ENCODE measurements at regions of chr1 and their contacts with region 1.

Region 1: DNA sequence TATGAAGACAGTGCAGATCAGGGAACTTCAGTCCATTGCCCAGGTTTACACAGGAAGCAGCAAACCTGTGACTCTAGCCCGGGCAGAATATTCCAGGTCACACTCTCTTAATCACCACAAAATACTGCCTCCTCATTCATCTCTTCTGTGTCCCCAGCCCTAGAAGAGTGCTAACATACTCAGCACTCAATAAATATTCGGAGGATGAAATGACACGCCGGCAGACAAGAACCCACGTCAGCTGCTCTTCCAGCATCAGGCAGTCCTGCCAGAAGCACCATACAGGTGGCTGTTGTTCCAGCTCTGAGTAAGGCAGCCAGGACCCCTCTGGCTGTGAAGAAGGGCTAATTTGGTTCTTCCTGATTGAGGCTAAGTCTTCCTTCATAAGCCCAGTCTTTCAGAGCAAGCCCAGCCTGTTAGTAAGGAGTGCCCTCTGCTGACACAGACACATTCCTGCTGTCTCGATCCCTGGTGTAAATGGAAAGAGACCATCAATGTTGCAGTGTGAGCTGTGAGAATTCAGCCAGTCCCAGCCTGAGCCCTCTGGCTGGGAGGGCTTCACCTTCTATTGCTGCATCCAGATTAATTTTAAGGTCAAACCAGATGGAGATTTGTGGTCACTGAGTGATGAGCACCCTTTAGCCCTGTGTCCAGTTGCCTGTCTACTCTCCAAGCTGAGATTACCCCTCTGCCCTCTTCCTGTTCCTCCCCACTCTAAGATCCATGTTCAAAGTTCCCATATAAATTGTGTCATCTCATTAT is 45.0 kb upstream of the KIRREL1 start:
- DNase-seq: peak; percentile 35
- H3K4me3 ChIP-seq: no peak overlapping the region
- H3K27ac ChIP-seq: no peak overlapping the region
- H3K4me1 ChIP-seq: no peaks in the 10 kb centered on the region
- H3K27me3 ChIP-seq: no peaks in the 10 kb centered on the region
- CTCF ChIP-seq: peak; percentile 77 to 87

Region 2: GRCh38 chr1:157380523-157380922 is 568.0 kb before region 1 on chr1:
- CTCF ChIA-PET with region 1: no interaction called
- dilution Hi-C with region 1: no loop called
- in situ Hi-C with region 1: no loop called
- intact Hi-C with region 1: loop called (anchors 2 kb)
- DNase-seq: no peak
- H3K4me3 ChIP-seq: no peak overlapping the region
- H3K27ac ChIP-seq: no peak overlapping the region
- H3K4me1 ChIP-seq: no peaks in the 10 kb centered on the region
- H3K27me3 ChIP-seq: no peaks in the 10 kb centered on the region
- CTCF ChIP-seq: no peak

Region 3: DNA sequence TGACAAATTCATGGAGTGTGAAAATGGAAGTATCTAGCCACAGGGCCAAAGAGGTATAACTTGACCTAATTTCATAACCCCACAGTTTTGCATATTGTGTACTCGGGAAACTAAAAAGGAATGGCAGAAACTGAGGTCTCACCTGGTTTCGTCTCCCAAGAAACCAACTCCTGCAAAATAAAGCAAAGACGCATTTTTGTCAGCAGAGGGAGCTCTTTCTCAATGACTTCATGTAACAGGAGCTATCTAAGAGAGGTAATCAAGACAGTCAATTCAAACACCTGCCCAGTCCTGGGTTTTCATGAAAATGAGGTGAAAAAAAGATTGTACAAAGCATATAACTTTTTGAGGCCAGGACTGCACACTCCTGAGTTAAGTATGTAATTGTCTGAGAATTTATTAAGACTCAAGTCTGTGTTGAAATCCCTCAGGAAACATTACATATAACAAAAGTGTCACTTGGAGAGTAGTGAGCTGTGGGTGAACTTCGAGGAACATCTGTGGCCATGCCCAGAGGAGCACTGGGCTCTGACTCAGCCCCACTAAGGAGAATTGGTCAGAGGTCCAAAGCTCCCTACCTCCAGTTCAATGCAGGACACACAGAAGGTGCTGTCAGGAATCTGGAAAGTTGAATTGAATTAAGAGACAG is 368.2 kb before region 1 on chr1:
- CTCF ChIA-PET with region 1: interaction called, 4 read pairs
- dilution Hi-C with region 1: no loop called
- in situ Hi-C with region 1: loop called in 1 of 2 experiments (anchors 25 kb)
- intact Hi-C with region 1: loop called (anchors 1 kb)
- DNase-seq: peak; percentile 58
- H3K4me3 ChIP-seq: no peak overlapping the region
- H3K27ac ChIP-seq: no peak overlapping the region
- H3K4me1 ChIP-seq: no peaks in the 10 kb centered on the region
- H3K27me3 ChIP-seq: peaks cover under 1% of the 10 kb centered on the region
- CTCF ChIP-seq: peak; percentile 76

Region 4: DNA sequence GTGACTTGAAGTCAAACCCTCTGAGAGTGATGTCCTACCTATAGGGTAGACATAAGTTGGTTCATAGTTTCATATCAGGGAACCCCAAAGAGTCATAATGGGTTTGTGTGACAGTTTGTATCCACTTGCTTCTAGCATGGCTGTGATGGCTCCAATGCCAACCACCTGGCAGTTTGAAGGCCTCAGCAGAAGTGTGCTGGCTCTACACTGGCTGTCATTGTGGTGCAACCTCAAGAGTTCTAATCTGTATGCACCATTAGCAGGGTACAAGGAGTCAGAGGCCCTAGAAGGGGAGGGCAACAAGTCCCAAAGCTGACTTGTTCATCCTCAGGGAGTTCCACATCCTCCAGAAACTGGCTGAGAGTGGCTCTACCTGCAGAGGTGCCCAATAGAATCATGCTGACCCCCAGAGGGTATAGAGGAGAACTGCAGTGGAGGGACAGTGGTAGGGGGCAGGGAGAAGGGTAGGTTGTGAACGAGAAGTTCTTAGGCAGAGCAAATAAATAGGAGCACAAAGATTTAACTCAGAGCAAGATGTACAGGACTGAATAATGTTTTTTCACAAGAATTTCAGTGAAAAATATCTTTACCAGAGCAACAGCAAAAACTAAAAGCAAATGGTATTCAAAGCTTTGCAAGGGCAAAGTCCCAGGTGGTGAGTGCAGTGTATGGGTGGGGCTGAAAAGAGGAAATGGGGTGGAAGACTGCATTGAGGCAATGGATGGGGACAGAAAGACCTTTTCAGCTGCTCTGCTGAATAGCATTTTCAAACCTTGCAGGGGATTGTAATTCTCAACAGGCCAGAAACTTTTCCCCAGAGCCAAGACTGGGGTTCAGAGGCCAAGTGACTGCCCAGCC is 174.8 kb before region 1 on chr1:
- CTCF ChIA-PET with region 1: no interaction called
- dilution Hi-C with region 1: loop called (anchors 25 kb)
- in situ Hi-C with region 1: no loop called
- intact Hi-C with region 1: loop called (anchors 1 kb)
- DNase-seq: no peak
- H3K4me3 ChIP-seq: no peak overlapping the region
- H3K27ac ChIP-seq: no peak overlapping the region
- H3K4me1 ChIP-seq: no peaks in the 10 kb centered on the region
- H3K27me3 ChIP-seq: peaks cover 6% of the 10 kb centered on the region
- CTCF ChIP-seq: peak; percentile 13 to 31

Region 5: GRCh38 chr1:157878059-157878458 is 70.4 kb before region 1 on chr1:
- CTCF ChIA-PET with region 1: interaction called, 10 read pairs
- dilution Hi-C with region 1: no loop called
- in situ Hi-C with region 1: loop called (anchors 5 kb)
- intact Hi-C with region 1: loop called (anchors 1 kb)
- DNase-seq: peak; percentile 35
- H3K4me3 ChIP-seq: no peak overlapping the region
- H3K27ac ChIP-seq: no peak overlapping the region
- H3K4me1 ChIP-seq: no peaks in the 10 kb centered on the region
- H3K27me3 ChIP-seq: peaks cover 3% of the 10 kb centered on the region
- CTCF ChIP-seq: peak; percentile 32 to 64

Region 6: DNA sequence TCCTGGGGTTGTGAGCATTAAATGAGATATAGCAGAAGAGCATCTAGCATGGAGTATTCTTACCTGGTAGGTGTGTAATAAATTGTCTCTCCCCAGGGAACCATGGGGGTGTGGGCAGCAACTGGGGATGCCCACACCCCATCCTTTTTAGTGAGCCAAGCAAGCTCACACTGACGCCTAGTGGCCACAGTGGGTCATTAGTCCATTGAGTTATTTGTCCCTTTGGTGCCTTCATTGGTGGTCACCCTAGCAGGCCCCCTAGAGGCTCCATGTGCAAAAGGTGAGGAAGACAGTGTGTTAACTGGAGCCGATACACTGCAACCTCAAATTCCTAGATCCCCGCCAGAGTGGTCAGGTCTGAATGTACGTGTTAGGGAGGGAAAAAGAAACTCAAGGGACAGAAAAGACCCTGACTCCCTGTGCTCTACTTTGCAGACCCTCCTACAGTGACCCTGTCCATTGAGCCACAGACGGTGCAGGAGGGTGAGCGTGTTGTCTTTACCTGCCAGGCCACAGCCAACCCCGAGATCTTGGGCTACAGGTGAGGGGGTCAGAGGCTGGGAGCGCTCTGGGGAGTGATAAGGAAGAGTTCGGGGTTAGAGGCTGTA is 138.9 kb after region 1 on chr1:
- CTCF ChIA-PET with region 1: no interaction called
- dilution Hi-C with region 1: no loop called
- in situ Hi-C with region 1: no loop called
- intact Hi-C with region 1: no loop called
- DNase-seq: peak; percentile 35
- H3K4me3 ChIP-seq: no peak overlapping the region
- H3K27ac ChIP-seq: no peak overlapping the region
- H3K4me1 ChIP-seq: no peaks in the 10 kb centered on the region
- H3K27me3 ChIP-seq: no peaks in the 10 kb centered on the region
- CTCF ChIP-seq: peak; percentile 86 to 92

Measured in mammary epithelial cell (primary cell).